A673 (cell line): ENCODE measurements at regions of chr6 and their contacts with region 1.

Region 1: DNA sequence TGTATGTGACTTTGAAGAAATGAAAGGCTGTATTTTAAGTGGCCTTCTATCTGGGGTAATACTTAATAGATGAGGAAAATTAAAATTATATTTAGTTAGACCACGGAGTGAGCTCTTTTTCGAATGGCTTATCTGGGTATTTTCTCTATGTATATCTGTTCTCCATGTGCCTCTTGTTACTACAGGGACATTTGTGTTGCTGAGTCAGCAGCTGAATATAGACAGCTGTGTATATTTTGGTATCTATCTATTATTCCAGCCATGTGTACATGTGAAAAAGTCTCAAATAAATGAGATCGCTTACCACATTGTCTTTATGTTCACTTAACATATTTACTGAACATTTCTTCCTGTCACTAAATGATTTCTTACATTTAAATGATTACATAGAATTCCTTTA is 57.2 kb downstream of the TMEM200A start:
- DNase-seq: no peak
- H3K4me3 ChIP-seq: no peak overlapping the region
- H3K27ac ChIP-seq: no peak overlapping the region
- H3K4me1 ChIP-seq: peaks cover 6% of the 10 kb centered on the region
- H3K27me3 ChIP-seq: no peaks in the 10 kb centered on the region
- CTCF ChIP-seq: no peak

Region 2: GRCh38 chr6:128630182-128630581 is 1792.9 kb before region 1 on chr6:
- CTCF ChIA-PET with region 1: no interaction called
- POLR2A ChIA-PET with region 1: interaction called, 16 read pairs
- intact Hi-C with region 1: no loop called
- DNase-seq: no peak
- H3K4me3 ChIP-seq: no peak overlapping the region
- H3K27ac ChIP-seq: no peak overlapping the region
- H3K4me1 ChIP-seq: no peaks in the 10 kb centered on the region
- H3K27me3 ChIP-seq: no peaks in the 10 kb centered on the region
- CTCF ChIP-seq: no peak

Region 3: GRCh38 chr6:130434174-130434873 is 11.3 kb after region 1 on chr6:
- CTCF ChIA-PET with region 1: no interaction called
- POLR2A ChIA-PET with region 1: no interaction called
- intact Hi-C with region 1: no loop called
- DNase-seq: peak; percentile 39
- H3K4me3 ChIP-seq: no peak overlapping the region
- H3K27ac ChIP-seq: no peak overlapping the region
- H3K4me1 ChIP-seq: peaks cover 26% of the 10 kb centered on the region
- H3K27me3 ChIP-seq: no peaks in the 10 kb centered on the region
- CTCF ChIP-seq: no peak

Region 4: DNA sequence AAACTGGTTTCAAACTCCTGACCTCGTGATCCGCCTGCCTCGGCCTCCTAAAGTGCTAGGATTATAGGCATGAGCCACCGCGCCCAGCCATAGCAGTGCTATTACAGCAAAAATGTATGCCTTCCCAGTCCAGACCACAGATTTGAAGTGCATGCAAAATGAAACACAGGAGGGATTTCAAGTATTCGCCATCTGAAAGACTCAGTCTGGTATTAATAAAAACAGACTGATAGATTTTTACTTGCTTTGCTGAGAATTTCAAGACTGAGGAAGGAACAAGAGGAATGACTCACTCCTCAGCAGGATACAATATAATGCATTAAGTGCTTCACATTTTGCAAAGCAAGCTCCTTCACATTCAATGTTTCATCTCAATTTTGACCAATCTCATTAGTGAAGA is 77.6 kb after region 1 on chr6:
- CTCF ChIA-PET with region 1: no interaction called
- POLR2A ChIA-PET with region 1: no interaction called
- intact Hi-C with region 1: no loop called
- DNase-seq: peak; percentile 92
- H3K4me3 ChIP-seq: no peak overlapping the region
- H3K27ac ChIP-seq: peak overlapping the region; percentile 34
- H3K4me1 ChIP-seq: peaks cover 36% of the 10 kb centered on the region
- H3K27me3 ChIP-seq: no peaks in the 10 kb centered on the region
- CTCF ChIP-seq: no peak